ENCODE measurements at regions of chr16 and their contacts with region 1.

Region 1: GRCh38 chr16:71961066-71962039 is 38.8 kb downstream of the PKD1L3 start:
- DNase-seq: peak; percentile 85
- H3K4me3 Mint-ChIP-seq: no peak overlapping the region
- H3K27ac Mint-ChIP-seq: no peak overlapping the region
- H3K4me1 Mint-ChIP-seq: peaks cover 15% of the 10 kb centered on the region
- H3K27me3 Mint-ChIP-seq: peaks cover 7% of the 10 kb centered on the region

Region 2: GRCh38 chr16:71894921-71895678 is 66.3 kb before region 1 on chr16 and contains the start of gene IST1:
- CTCF ChIA-PET with region 1: interaction called, 13 read pairs
- POLR2A ChIA-PET with region 1: no interaction called
- DNase-seq: peak; percentile 98
- H3K4me3 Mint-ChIP-seq: peak within 1 kb of the TSS; percentile 99
- H3K27ac Mint-ChIP-seq: peak within 1 kb of the TSS; percentile 97
- H3K4me1 Mint-ChIP-seq: peaks cover 29% of the 10 kb centered on the region
- H3K27me3 Mint-ChIP-seq: no peaks in the 10 kb centered on the region
- total RNA-seq, gene IST1: 227 to 229 TPM

Region 3: GRCh38 chr16:72001180-72001874 is 40.0 kb after region 1 on chr16:
- CTCF ChIA-PET with region 1: interaction called, 12 read pairs
- POLR2A ChIA-PET with region 1: no interaction called
- DNase-seq: no peak
- H3K4me3 Mint-ChIP-seq: no peak overlapping the region
- H3K27ac Mint-ChIP-seq: no peak overlapping the region
- H3K4me1 Mint-ChIP-seq: peaks cover 6% of the 10 kb centered on the region
- H3K27me3 Mint-ChIP-seq: no peaks in the 10 kb centered on the region

Region 4: DNA sequence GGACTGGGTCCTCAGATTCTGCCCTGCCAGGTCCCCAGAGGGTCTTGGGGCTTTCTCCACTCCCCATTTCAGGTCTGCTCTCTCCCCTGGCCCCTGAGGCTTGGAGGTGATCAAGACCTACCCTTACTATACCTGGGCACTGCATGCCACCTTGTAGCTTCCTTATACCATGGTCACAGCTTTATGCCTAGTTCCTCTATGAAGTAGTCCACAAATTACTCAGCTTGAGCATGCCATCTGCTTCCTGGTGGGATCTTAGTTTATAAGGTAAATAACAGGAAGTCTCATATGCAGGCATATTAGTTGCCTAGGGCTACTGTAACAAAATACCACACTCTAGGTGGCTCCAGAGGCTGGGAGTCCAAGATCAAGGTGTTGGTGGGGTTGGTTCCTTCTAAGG is 221.6 kb after region 1 on chr16:
- CTCF ChIA-PET with region 1: no interaction called
- POLR2A ChIA-PET with region 1: no interaction called
- DNase-seq: no peak
- H3K4me3 Mint-ChIP-seq: no peak overlapping the region
- H3K27ac Mint-ChIP-seq: no peak overlapping the region
- H3K4me1 Mint-ChIP-seq: no peaks in the 10 kb centered on the region
- H3K27me3 Mint-ChIP-seq: no peaks in the 10 kb centered on the region

Region 5: DNA sequence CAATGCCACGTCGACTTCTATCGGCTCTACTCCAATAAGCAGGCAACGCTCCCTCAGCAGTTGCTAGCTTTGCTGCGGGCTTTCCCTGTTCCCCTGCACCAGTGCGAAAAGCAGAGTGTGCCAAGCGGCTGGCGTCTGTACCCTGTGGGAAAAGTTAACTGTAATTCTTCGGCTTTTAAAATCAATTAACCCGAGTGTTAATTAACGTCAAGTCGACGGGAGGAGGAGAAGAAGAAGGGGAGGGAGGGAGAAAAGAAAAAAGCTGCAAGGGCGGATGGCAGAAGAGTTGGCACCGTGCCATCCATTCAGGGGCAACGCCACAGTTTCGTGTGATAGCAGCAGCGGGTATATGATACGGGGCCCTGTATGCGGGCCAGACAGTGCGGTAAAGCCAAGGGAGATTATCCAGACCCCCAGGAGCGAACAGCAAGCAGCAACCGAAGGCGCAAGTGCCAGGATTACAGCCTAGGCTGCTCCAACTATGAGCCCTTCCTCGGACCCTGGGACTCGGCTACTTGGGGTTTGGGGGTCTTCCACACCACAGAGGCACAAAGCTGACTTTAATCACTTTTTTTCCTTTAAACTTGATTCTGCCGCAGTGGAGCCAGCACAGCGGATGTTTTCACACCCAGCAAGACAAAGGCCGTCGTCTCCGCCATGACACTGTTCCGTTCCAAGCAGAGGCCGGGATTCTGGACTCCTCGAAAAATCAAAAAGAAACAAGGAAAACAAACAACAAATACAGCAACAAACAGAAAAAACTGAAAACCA is 464.4 kb after region 1 on chr16:
- CTCF ChIA-PET with region 1: no interaction called
- POLR2A ChIA-PET with region 1: no interaction called
- DNase-seq: no peak
- H3K4me3 Mint-ChIP-seq: no peak overlapping the region
- H3K27ac Mint-ChIP-seq: no peak overlapping the region
- H3K4me1 Mint-ChIP-seq: no peaks in the 10 kb centered on the region
- H3K27me3 Mint-ChIP-seq: no peaks in the 10 kb centered on the region